ENCODE measurements at regions of chr15 and their contacts with region 1.

Region 1: GRCh38 chr15:38563723-38564519 is 693 bp downstream of the RASGRP1 start:
- DNase-seq: peak; percentile 89
- ATAC-seq: peak; percentile 63
- H3K4me3 Mint-ChIP-seq: peak overlapping the region; percentile 83
- H3K27ac Mint-ChIP-seq: peak overlapping the region; percentile 96
- H3K4me1 Mint-ChIP-seq: peaks cover 52% of the 10 kb centered on the region
- H3K27me3 Mint-ChIP-seq: no peaks in the 10 kb centered on the region
- CTCF ChIP-seq: peak; percentile 96

Region 2: DNA sequence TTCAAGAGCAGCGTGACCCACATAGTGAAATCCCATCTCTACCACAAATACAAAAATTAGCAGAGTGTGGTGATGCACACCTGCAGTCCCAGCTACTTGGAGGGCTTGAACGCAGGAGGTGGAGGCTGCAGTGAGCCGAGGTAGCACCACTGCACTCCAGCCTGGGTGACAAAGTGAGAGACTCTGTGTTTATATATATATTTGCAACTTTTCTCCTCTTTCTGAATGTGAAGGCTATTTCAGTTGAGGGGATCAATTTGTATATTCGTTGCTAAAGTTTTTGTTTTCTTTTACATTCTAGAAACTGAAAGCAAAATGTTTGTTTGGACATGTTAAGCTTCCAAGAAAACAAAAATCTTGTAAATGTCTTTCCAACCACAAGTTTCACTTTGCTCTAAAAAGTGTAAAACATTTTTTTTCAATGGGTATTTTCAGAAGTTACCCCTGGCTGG is 139.8 kb before region 1 on chr15:
- CTCF ChIA-PET with region 1: no interaction called
- POLR2A ChIA-PET with region 1: no interaction called
- intact Hi-C with region 1: no loop called
- DNase-seq: no peak
- ATAC-seq: no peak
- H3K4me3 Mint-ChIP-seq: no peak overlapping the region
- H3K27ac Mint-ChIP-seq: no peak overlapping the region
- H3K4me1 Mint-ChIP-seq: no peaks in the 10 kb centered on the region
- H3K27me3 Mint-ChIP-seq: peaks cover 19% of the 10 kb centered on the region
- CTCF ChIP-seq: no peak

Region 3: DNA sequence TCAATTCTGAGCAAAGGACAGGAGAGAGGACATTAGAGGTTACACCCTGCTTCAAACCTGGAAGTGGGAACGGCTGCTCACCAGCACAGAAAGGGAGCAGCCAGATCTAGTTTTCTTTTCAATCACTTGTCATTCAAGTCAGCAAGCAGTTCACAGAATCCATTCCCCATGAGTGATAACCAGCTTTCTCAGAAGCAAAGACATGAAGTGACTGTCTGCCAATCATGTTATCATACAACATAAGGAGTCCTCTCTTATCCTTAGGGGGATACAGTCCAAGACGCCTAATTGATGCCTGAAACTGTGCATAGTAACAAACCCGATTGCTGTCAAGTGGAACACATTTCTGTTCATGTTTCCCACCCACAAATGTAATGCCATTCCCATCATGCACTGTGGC is 55.3 kb before region 1 on chr15:
- CTCF ChIA-PET with region 1: interaction called, 10 read pairs
- POLR2A ChIA-PET with region 1: interaction called, 3 read pairs
- intact Hi-C with region 1: no loop called
- DNase-seq: peak; percentile 33
- ATAC-seq: peak; percentile 78
- H3K4me3 Mint-ChIP-seq: no peak overlapping the region
- H3K27ac Mint-ChIP-seq: peak overlapping the region; percentile 93
- H3K4me1 Mint-ChIP-seq: peaks cover 38% of the 10 kb centered on the region
- H3K27me3 Mint-ChIP-seq: no peaks in the 10 kb centered on the region
- CTCF ChIP-seq: no peak

Region 4: DNA sequence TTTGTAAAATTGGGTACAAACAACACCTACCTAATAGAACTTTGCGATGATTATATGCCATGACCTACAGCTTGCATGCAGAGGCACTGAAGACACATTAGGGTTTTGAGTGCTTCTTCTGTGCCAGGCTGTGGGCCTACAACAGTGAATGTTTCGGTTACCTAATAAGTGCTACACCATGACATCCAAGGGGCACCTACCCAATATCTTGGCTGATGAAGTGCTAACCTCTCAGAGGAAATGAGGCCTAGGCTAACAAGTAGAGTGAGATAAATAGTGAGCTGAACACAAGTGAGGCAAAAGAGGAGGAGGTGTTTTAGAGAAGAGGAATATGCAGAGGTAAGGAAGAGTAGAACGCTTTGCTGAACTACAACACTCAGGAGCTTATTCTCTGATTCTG is 12.9 kb after region 1 on chr15:
- CTCF ChIA-PET with region 1: interaction called, 15 read pairs
- POLR2A ChIA-PET with region 1: interaction called, 11 read pairs
- intact Hi-C with region 1: no loop called
- DNase-seq: no peak
- ATAC-seq: peak; percentile 54
- H3K4me3 Mint-ChIP-seq: no peak overlapping the region
- H3K27ac Mint-ChIP-seq: peak overlapping the region; percentile 82
- H3K4me1 Mint-ChIP-seq: peaks cover 33% of the 10 kb centered on the region
- H3K27me3 Mint-ChIP-seq: no peaks in the 10 kb centered on the region
- CTCF ChIP-seq: no peak

Region 5: DNA sequence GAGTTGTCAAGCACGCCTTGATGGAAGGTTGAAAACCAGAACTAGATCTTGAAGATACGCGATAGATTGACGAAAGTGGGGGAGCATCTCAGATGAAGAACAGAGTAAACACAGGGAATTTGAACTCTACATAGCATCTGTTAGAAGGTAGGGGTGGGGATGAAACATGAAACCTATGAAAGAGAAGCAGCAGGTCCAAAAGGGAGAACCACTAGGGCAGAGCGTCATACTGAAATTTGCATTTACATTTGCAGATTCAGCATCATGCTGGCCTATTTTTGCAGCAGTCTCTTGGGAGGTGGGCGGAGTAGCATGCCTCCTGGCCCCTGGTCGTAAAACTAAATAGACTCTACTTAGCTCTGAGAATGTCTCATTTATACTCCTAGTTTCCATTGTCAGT is 46.8 kb after region 1 on chr15:
- CTCF ChIA-PET with region 1: interaction called, 71 read pairs
- POLR2A ChIA-PET with region 1: interaction called, 90 read pairs
- intact Hi-C with region 1: loop called (anchors 2 kb)
- DNase-seq: peak; percentile 84
- ATAC-seq: peak; percentile 64
- H3K4me3 Mint-ChIP-seq: peak overlapping the region; percentile 5
- H3K27ac Mint-ChIP-seq: peak overlapping the region; percentile 89
- H3K4me1 Mint-ChIP-seq: peaks cover 73% of the 10 kb centered on the region
- H3K27me3 Mint-ChIP-seq: no peaks in the 10 kb centered on the region
- CTCF ChIP-seq: no peak

Region 6: GRCh38 chr15:38624244-38625205 is 60.6 kb after region 1 on chr15:
- CTCF ChIA-PET with region 1: interaction called, 32 read pairs
- POLR2A ChIA-PET with region 1: interaction called, 4 read pairs
- intact Hi-C with region 1: no loop called
- DNase-seq: no peak
- ATAC-seq: no peak
- H3K4me3 Mint-ChIP-seq: no peak overlapping the region
- H3K27ac Mint-ChIP-seq: no peak overlapping the region
- H3K4me1 Mint-ChIP-seq: peaks cover 33% of the 10 kb centered on the region
- H3K27me3 Mint-ChIP-seq: no peaks in the 10 kb centered on the region
- CTCF ChIP-seq: no peak

Region 7: DNA sequence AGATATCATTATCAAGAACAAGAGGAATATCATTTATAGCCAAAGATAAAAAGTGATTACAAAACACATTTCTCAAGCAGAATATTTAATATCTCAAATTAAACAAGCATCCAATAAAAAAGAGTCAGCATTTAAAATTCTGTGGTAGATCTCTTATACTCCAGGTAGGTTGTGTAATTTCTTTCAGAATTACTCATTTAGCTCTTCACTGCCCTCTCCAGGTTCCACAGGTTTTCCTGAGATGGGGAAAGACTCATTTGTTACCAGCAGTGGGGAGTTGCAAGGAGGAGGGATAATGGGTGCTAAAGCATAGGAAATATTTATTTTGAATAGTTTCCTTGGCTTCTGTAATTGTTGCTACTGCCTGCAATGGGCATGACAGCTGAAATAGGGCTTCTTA is 83.8 kb after region 1 on chr15:
- CTCF ChIA-PET with region 1: interaction called, 90 read pairs
- POLR2A ChIA-PET with region 1: interaction called, 70 read pairs
- intact Hi-C with region 1: no loop called
- DNase-seq: no peak
- ATAC-seq: no peak
- H3K4me3 Mint-ChIP-seq: no peak overlapping the region
- H3K27ac Mint-ChIP-seq: no peak overlapping the region
- H3K4me1 Mint-ChIP-seq: peaks cover 71% of the 10 kb centered on the region
- H3K27me3 Mint-ChIP-seq: no peaks in the 10 kb centered on the region
- CTCF ChIP-seq: no peak

Region 8: GRCh38 chr15:38671675-38672254 is 107.8 kb after region 1 on chr15:
- CTCF ChIA-PET with region 1: interaction called, 127 read pairs
- POLR2A ChIA-PET with region 1: interaction called, 39 read pairs
- intact Hi-C with region 1: no loop called
- DNase-seq: peak; percentile 72
- ATAC-seq: peak; percentile 61
- H3K4me3 Mint-ChIP-seq: peak overlapping the region; percentile 62
- H3K27ac Mint-ChIP-seq: peak overlapping the region; percentile 95
- H3K4me1 Mint-ChIP-seq: peaks cover 75% of the 10 kb centered on the region
- H3K27me3 Mint-ChIP-seq: no peaks in the 10 kb centered on the region
- CTCF ChIP-seq: no peak